ENCODE measurements at regions of chr5 and their contacts with region 1.

Region 1: GRCh38 chr5:140547508-140548299 is at the start of gene EIF4EBP3:
- DNase-seq: peak; percentile 98
- H3K4me3 ChIP-seq: peak within 1 kb of the TSS; percentile 32
- H3K27ac ChIP-seq: peak within 1 kb of the TSS; percentile 93
- H3K4me1 ChIP-seq: peaks cover 22% of the 10 kb centered on the region
- H3K27me3 ChIP-seq: no peaks in the 10 kb centered on the region
- CTCF ChIP-seq: peak; percentile 47
- total RNA-seq, gene EIF4EBP3: 13.5 to 13.8 TPM

Region 2: DNA sequence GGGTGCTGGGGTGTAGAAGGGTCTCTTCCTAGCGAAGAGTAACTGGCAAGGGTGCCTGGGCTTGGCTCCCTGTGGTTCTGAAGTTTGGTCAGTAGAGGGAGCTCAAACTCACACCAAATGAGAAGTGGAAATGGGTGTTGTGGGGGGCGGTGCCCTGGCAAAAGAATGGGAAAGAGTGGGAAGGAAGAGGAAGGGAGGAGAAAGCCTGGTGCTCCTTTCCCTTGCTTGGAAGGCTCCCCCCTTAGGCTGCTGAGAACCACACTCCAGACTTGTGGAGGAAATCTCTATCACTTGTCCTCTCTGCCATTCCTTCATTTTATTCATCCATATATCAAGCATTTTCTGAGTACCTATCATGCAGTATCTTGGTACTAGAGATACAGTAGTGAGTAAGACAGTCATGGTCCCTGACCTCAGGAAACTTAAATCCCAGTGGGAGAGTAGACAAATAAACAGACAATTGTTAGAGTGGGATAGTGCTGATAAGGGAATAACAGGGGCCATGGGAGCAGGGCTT is 174.7 kb before region 1 on chr5:
- intact Hi-C with region 1: loop called (anchors 10 kb)
- DNase-seq: peak; percentile 81
- H3K4me3 ChIP-seq: no peak overlapping the region
- H3K27ac ChIP-seq: no peak overlapping the region
- H3K4me1 ChIP-seq: peaks cover 5% of the 10 kb centered on the region
- H3K27me3 ChIP-seq: no peaks in the 10 kb centered on the region
- CTCF ChIP-seq: peak; percentile 68

Region 3: DNA sequence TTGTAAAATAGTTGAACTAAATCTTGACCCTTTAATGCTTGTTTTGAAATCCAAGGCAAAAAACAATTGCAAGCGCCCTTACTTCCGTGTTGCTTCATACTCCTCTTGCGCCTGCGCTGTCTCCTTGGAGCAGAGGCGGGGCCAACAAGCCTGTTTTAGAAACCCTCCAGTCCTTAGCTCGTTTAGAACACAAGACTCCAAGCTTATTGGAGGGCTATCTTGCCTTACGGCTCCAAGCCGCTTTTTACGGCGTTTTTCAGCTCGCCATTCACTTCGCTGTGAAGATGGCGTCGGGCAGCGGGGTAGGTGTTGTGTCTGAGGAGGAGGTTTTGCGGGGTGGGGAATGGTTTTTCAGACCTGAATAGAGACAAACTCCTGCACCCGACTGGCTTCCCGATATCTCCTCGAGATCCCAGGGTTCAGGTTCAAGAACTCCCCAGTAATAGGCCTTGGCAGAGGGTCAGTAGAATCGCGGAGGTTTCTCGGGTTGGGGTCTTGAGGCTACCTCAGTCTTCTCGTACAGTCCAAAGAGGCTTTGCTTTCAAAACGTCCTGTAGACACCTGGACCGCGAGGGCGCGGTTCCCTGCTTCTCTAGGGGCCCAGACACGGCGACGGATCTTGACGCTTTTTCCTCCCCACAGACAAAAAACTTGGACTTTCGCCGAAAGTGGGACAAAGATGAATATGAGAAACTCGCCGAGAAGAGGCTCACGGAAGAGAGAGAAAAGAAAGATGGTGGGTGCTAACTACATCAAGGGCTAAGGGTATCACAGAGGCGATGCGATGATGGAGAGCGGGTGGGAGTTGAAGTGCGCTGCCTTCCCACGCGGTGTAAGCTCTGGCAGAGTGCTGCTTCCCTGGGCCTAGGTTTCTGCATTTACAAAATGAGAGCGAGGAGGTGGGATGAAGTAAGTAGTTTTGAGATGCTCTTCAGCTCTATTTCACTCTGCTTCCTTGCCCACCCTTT is 152.8 kb after region 1 on chr5 and contains the start of gene ZMAT2:
- intact Hi-C with region 1: loop called (anchors 10 kb)
- DNase-seq: peak; percentile 98
- H3K4me3 ChIP-seq: peak within 1 kb of the TSS; percentile 95
- H3K27ac ChIP-seq: peak within 1 kb of the TSS; percentile 55
- H3K4me1 ChIP-seq: peaks cover 9% of the 10 kb centered on the region
- H3K27me3 ChIP-seq: no peaks in the 10 kb centered on the region
- CTCF ChIP-seq: no peak
- total RNA-seq, gene ZMAT2: 43.8 to 49.4 TPM

Measured in colonic mucosa (tissue), 4 donors.